GM10248 (cell line): ENCODE measurements at regions of chr19 and their contacts with region 1.

Region 1: GRCh38 chr19:49676690-49677231 is 310 bp upstream of the PRMT1 start:
- DNase-seq: peak; percentile 95
- CTCF ChIP-seq: no peak

Region 2: DNA sequence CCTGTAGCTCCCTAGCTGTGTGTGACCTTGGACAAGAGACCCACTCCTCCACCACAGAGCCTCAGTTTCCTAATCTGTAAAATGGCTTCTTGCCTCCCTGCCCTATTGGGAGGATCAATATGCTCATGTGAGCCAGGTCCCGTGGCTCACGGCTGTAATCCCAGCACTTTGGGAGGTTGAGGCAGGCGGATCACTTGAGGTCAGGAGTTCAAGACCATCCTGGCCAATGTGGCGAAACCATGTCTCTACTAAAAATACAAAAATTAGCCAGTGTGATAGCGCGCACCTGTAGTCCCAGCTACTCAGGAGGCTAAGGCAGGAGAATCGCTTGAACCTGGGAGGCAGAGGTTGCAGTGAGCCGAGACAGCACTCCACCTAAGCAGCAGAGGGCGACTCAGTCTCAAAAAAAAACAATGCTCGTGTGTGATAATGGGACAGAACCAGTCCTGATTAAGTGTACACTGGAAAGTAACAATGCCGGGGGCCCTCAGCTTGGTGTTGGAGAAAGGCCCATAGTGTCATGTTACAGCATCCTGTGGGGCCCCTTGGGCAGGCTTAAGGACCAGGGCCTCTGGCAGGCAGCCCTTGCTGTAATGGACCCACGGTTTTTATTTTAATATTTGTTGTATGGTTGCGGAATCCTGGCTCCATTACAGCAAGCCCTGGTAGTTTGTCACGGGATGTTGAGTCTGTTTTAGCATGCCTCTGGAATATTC is 173.7 kb before region 1 on chr19:
- CTCF ChIA-PET with region 1: interaction called, 83 read pairs
- POLR2A ChIA-PET with region 1: interaction called, 17 read pairs
- DNase-seq: no peak
- CTCF ChIP-seq: peak; percentile 59

Region 3: DNA sequence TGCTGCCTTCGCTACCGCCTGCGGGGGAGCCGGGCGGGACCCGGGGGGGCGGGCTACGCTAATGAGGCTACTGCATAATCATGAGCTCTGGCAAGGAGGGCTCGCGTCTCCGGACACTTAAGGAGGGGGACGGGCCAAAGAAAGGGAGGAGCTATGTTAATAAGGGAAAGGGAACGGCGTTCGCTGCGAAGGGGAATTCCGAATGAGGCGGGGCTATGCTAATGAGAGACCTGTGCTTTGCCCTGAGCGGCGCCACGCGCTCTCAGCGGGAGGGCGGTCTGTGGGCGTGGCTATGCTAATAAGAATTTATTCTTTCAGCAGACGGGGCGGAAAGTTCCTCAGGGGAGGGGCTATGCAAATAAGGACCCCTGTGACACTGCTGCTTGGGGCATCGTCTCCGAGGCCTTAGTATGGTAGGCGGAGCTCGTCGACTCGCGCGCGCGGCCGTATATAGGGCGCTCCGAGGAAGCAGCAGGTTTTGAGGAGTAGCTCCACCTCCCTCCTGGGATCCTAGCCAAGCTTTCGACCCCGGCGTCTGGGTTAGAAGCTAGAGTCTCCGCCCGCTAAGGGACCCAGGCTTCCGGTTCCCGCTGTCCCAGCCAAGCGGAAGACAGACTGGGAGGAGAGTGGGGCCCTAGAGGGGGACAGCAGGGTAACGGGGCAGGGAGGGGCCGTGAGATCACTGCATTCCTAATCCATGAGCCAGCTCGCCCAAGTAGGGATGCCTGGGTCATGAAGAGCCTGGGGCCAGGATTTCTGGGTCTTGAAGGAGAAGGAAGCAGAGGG is 36.5 kb before region 1 on chr19 and contains the start of gene RRAS:
- CTCF ChIA-PET with region 1: interaction called, 48 read pairs
- POLR2A ChIA-PET with region 1: interaction called, 29 read pairs
- DNase-seq: peak; percentile 98
- CTCF ChIP-seq: no peak

Region 4: GRCh38 chr19:49655570-49656455 is 20.9 kb before region 1 on chr19:
- CTCF ChIA-PET with region 1: interaction called, 30 read pairs
- POLR2A ChIA-PET with region 1: interaction called, 3 read pairs
- DNase-seq: no peak
- CTCF ChIP-seq: no peak

Region 5: DNA sequence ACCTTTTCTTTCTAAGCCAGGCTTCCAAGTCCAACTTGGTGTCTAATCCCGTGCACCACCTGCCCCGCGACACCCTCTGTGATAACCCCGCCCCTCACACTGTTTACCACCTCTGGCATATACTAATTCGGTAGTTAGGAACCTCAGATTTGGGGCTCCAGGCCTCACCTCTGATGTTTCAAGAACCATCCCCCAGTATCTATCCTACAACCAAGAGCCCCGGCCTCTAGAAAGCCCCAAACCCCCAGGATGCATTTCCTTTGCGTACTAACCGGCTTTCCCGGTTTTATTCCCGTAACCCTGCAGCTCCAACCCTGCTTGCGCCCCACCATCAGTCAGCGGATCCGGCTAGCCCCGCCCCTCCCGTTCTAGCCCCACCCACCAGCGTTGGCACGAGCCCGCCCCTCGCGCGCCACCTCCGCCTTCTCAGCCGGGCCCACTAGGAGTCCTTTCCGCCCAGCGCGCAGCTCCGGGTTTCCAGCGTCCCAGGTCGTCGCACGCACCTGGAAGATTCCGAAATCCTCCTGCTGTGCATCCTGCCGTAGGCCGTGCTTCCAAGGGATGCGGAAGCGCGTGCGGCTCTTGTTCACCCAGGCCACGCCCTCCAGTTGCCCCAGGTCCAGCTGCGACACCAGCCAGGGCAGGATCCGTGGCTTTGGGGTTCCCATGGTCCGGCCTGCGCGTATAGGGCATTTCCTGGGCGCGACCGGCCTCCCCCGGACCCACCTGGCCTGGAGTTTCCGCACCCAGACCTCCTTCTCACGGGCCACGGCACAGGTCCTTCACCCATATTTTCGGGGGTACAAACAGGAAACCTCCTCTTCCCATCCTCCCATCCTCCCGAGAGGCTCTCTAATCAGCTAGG is 12.4 kb before region 1 on chr19:
- CTCF ChIA-PET with region 1: interaction called, 12 read pairs
- POLR2A ChIA-PET with region 1: interaction called, 13 read pairs
- DNase-seq: peak; percentile 88
- CTCF ChIP-seq: peak; percentile 10

Region 6: DNA sequence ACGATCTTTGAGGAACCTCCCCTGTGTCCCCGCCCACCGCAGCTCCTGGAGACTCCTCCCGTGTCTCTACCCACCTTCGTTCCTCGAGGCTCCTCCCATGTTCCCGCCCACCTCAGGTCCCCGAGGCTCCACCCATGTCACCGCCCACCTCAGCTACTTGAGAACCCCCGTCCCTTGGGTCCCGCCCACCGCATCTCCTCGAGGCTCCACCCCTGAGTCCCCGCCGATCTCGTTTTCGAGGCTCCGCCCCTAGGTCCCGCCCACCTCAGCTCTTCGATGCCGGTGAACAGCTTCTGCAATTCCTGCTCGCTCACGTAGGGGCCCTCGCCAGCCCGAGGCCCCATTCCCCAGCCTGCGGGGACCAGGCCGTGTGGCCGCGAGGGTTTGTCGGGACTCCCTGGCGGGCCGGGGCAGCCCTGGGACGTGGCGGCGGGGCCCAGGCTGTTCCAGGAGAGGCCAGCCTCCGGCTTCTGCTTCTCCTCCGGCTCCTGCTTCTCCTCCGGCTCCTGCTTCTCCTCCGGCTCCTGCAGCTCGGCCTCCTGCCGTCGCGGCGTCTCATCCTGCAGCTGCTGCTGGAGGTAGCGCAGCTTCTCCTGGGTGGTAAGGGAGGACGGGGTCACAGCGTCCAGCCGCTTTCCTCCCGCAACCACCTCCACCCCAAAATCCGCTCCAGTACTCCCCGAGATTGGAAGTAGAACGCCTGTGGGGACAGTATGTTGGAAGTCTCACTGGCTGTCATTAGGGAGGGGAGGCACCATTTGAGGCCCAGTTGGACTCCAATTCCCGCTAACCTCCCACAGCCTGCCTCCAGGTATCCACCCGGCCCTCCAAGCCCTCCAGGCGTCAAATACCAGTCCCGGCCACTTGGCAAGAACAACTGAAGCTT is 69.7 kb after region 1 on chr19:
- CTCF ChIA-PET with region 1: no interaction called
- POLR2A ChIA-PET with region 1: no interaction called
- DNase-seq: peak; percentile 38
- CTCF ChIP-seq: no peak

Region 7: GRCh38 chr19:49847731-49848696 is 171.3 kb after region 1 on chr19:
- CTCF ChIA-PET with region 1: no interaction called
- POLR2A ChIA-PET with region 1: no interaction called
- DNase-seq: no peak
- CTCF ChIP-seq: no peak

Region 8: DNA sequence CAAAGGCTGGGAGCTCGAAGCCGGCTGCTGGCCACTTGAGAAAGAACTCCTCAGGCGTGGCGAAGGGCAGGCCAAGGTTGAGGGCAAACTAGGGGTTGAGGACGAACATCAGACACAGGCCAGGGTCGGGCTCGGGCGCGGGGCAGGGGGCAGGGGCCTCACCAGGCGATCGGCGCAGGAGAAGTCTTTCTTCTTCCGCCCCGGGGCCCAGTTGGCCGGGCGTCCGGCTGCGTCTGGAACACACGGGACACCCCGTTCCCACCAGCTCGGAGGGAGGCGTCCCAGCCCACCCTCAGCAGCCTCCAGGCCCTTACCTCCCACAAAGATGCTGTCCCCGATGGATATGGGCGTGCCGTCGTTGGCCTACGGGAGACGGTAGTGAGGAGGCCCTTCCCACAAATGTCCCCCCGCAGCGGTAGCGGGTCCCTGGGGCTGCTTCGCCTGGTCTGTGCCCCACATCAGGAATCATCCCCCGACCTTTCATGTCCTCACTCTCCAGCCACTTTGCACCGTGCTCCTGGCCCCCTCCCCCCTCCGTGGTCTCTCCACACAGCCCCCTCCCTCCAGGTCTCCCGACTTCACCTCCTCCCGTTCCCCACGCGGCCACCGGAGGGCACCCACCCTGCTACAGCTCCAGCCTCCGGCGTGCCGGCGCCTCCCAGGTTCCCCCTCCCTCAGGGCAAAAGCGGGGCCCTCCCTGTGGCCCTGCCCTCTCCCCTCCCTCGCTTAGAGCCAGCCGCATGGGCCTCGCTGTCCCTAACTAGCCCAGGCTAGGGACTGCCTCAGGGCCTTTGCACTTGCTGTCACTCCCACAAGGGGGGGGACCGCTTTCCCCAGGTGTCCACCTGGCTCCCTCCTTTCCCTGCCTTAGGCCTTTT is 185.9 kb after region 1 on chr19:
- CTCF ChIA-PET with region 1: no interaction called
- POLR2A ChIA-PET with region 1: no interaction called
- DNase-seq: no peak
- CTCF ChIP-seq: peak; percentile 6